ENCODE measurements at regions of chrX and their contacts with region 1.

Region 1: GRCh38 chrX:13087322-13088155 is 43.1 kb upstream of the FAM9C start:
- DNase-seq: peak; percentile 53
- CTCF ChIP-seq: no peak

Region 2: GRCh38 chrX:13000301-13000811 is 87.2 kb before region 1 on chrX:
- in situ Hi-C with region 1: loop called (anchors 5 kb)
- DNase-seq: no peak
- CTCF ChIP-seq: no peak

Region 3: DNA sequence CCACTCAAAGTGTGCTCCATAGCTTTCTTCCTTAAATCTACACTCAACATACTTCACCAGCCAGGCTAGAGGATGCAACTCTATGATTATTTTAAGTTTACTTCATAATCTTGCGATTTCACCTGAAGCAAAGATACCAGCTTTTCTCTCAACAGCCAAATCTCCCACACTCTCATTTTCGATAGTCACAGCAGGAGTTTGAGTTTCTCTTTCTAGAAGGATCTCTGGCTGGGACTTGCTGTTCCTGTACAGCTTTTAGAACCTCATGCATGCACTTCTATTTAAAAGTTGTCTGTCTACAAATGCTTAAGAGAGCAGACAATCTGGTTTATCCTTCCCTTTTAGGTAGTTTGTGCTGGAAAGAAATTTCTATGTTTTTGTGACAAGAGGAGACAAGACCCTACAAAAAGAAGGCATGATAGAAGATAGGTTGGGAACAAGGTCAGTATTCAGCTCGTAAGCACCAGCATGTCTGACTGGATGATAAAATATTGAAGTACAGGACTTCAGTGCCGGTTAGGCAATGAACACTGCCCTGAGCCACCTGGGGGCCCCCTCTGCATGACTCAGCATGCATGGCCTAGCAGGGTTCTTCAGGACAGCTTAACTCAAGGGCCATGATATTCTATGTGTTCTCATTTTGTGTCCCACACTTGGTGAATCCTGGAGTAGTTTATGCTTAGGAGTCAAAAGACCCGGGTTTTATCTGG is 166.7 kb after region 1 on chrX:
- in situ Hi-C with region 1: loop called (anchors 5 kb)
- DNase-seq: no peak
- CTCF ChIP-seq: peak; percentile 34

Region 4: DNA sequence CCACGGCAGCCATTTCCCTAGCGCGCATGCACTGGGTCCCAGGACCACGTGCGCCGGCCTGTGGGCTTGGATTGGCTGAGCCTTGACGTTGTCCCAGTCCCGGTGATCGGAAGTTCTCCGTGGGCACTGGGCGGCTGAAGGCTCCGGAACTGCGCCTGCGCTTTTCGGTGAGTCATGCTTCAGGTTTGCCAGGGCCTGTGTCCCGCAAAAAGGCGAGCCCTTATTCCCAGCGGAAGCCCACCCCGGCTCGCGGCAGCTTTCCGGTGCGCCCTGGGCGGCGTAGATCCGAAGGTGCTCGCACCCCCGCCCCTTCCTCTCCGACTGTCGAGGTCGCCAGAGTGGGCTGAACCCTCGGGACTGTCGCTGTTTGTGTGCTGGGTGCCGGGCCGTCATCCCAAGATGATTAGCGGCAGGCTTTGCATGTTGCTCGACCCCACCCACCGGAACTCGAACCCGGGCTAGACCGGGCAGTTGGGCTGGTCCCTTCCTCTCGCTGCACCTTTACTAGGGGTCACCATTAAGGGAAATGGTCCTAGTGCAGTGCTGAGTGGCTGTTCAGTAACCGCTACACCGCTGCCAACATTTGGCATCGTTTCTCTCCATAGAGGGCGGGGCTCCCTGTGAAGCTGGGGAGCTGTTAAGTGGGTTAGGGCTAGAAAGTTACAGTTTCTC is 565.6 kb after region 1 on chrX and contains the start of gene TCEANC:
- in situ Hi-C with region 1: loop called (anchors 25 kb)
- DNase-seq: peak; percentile 92
- CTCF ChIP-seq: no peak

Measured in GM13976 (cell line).